ENCODE measurements at regions of chr12 and their contacts with region 1.

Region 1: GRCh38 chr12:24852420-24852819 is 96.5 kb downstream of the BCAT1 start:
- DNase-seq: peak in 1 of 3 donors; percentile 19
- H3K4me3 ChIP-seq: no peak overlapping the region
- H3K27ac ChIP-seq: no peak overlapping the region
- H3K4me1 ChIP-seq: peaks cover 17 to 51% (median 41%) of the 10 kb centered on the region in 4 experiments
- H3K27me3 ChIP-seq: no peaks in the 10 kb centered on the region

Region 2: GRCh38 chr12:24838531-24838950 is 13.9 kb before region 1 on chr12:
- CTCF ChIA-PET with region 1: interaction called, 23 read pairs
- POLR2A ChIA-PET with region 1: no interaction called
- DNase-seq: peak; percentile 24 to 88 (median 83)
- H3K4me3 ChIP-seq: no peak overlapping the region
- H3K27ac ChIP-seq: no peak overlapping the region
- H3K4me1 ChIP-seq: peaks cover 0 to 19% (median 15%) of the 10 kb centered on the region in 4 experiments
- H3K27me3 ChIP-seq: no peaks in the 10 kb centered on the region

Region 3: DNA sequence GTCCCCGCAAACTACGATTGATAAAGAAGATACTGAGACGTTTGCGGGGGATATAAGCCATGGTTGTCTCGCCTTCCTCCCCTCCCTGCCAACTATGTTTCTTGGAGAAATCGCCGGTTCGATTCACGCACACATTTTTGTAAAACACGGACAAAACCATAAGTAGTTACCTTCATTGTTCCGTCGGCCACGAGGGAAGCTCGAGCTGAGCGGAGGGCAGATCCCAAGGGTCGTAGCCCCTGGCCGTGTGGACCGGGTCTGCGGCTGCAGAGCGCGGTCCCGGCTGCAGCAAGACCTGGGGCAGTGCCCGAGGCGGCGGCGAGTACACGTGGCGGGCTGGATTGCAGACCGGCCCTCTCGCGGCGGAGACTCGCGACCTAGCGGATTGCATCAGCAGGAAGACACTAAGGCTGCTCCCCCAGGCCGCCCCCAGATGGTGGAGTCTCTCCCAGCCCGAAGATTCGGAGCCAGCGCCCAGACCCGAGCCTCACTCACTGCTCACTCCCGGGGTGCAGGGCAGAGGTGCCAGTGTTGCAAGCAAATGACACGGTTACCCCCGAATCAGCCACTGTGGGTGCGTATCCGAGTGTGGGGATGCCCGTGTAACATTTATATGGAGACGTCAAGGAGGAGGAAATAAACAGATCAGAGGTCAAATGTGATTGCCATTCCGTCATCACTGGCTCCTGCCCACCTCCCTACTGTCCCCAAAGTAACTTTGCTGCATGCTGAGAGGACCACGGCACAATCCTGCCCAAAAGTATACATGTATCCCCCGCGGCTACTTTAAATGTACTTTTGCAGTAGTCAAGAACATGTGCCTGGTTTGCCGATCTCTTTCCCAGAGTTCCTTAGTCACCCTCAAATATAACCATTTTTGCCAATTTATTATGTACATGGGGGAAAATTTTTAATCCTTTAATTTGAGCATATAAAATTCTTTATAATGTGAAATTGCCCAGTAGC is 96.6 kb after region 1 on chr12 and contains the start of gene BCAT1:
- CTCF ChIA-PET with region 1: interaction called, 10 read pairs
- POLR2A ChIA-PET with region 1: interaction called, 3 read pairs
- DNase-seq: peak; percentile 72 to 80 (median 79)
- H3K4me3 ChIP-seq: peak within 1 kb of the TSS; percentile 93 to 99 (median 96)
- H3K27ac ChIP-seq: peak within 1 kb of the TSS; percentile 69 to 84
- H3K4me1 ChIP-seq: peaks cover 14 to 42% (median 40%) of the 10 kb centered on the region in 4 experiments
- H3K27me3 ChIP-seq: no peaks in the 10 kb centered on the region

Region 4: GRCh38 chr12:24966951-24967564 is 114.6 kb after region 1 on chr12:
- CTCF ChIA-PET with region 1: no interaction called
- POLR2A ChIA-PET with region 1: no interaction called
- DNase-seq: no peak
- H3K4me3 ChIP-seq: no peak overlapping the region
- H3K27ac ChIP-seq: no peak overlapping the region
- H3K4me1 ChIP-seq: no peaks in the 10 kb centered on the region
- H3K27me3 ChIP-seq: no peaks in the 10 kb centered on the region

Region 5: GRCh38 chr12:25020621-25021243 is 168.3 kb after region 1 on chr12:
- CTCF ChIA-PET with region 1: no interaction called
- POLR2A ChIA-PET with region 1: no interaction called
- DNase-seq: no peak
- H3K4me3 ChIP-seq: no peak overlapping the region
- H3K27ac ChIP-seq: no peak overlapping the region
- H3K4me1 ChIP-seq: no peaks in the 10 kb centered on the region
- H3K27me3 ChIP-seq: no peaks in the 10 kb centered on the region

Measured in common myeloid progenitor, CD34-positive (primary cell).